HCT116 (cell line): ENCODE measurements at regions of chr18 and their contacts with region 1.

Region 1: GRCh38 chr18:76499637-76500340 is 4.7 kb upstream of the ZNF516 start:
- DNase-seq: no peak
- ATAC-seq: no peak
- H3K4me3 ChIP-seq: no peak overlapping the region
- H3K27ac ChIP-seq: no peak overlapping the region
- H3K4me1 ChIP-seq: peaks cover 0 to 12% of the 10 kb centered on the region in 2 experiments; a peak in 1 of 4 replicates
- H3K27me3 ChIP-seq: no peaks in the 10 kb centered on the region
- CTCF ChIP-seq: no peak
- POLR2A ChIP-seq: no peak
- RAD21 ChIP-seq: no peak

Region 2: GRCh38 chr18:74880706-74881278 is 1619.0 kb before region 1 on chr18:
- CTCF ChIA-PET with region 1: no interaction called
- POLR2A ChIA-PET with region 1: no interaction called
- RAD21 ChIA-PET with region 1: no interaction called
- intact Hi-C with region 1: no loop called
- DNase-seq: no peak
- ATAC-seq: no peak
- H3K4me3 ChIP-seq: no peak overlapping the region
- H3K27ac ChIP-seq: no peak overlapping the region
- H3K4me1 ChIP-seq: no peaks in the 10 kb centered on the region
- H3K27me3 ChIP-seq: no peaks in the 10 kb centered on the region
- CTCF ChIP-seq: no peak
- POLR2A ChIP-seq: no peak
- RAD21 ChIP-seq: no peak

Region 3: GRCh38 chr18:76429262-76430126 is 70.3 kb before region 1 on chr18:
- CTCF ChIA-PET with region 1: no interaction called
- POLR2A ChIA-PET with region 1: no interaction called
- RAD21 ChIA-PET with region 1: no interaction called
- intact Hi-C with region 1: no loop called
- DNase-seq: no peak
- ATAC-seq: no peak
- H3K4me3 ChIP-seq: no peak overlapping the region
- H3K27ac ChIP-seq: no peak overlapping the region
- H3K4me1 ChIP-seq: peaks cover 0 to 3% of the 10 kb centered on the region in 2 experiments; a peak in 1 of 4 replicates
- H3K27me3 ChIP-seq: no peaks in the 10 kb centered on the region
- CTCF ChIP-seq: no peak
- POLR2A ChIP-seq: no peak
- RAD21 ChIP-seq: no peak

Region 4: DNA sequence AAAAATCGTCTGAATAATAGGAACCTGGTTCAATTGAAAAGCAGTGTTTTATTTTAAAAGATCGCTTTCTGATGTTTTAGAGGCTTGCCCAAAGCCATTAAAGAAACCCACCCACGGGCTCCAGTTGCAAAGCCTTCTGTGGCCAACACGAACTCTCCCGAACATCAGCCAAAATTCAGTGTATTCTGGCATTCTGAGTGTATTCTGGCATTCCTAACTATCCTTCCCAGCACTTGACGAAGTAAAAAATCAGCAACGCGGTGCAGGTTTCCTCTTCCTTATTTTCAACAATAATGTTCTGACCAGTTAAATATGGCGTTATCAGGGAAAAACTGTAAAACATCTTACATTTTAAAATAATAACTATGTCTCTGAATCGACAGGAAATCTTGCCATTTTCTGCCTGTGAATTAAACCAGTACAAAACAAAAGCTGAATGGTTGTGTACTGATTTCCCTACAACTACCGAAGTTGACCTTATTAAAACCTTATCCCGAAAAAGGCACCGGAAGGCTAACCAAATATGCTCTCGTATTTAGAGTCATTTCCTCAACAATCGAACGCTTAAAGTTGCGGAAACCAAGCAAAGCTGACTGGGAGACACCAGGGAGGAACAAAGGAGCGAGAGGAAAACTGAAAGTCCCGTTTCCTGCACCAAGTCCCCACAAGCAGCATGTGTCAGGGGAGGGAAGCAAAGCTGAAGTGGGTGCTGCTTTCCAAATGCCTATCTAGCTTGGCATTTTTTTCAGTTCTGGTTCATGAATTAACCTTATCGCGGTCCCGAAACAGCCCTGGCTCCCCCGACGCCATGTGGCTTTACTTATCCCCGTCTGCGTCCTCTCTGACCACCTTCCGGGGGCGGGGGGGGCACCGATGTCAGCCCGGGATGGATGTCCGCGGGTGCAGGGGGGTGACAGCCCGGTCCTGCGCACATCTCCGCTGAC is 49.1 kb before region 1 on chr18:
- CTCF ChIA-PET with region 1: no interaction called
- POLR2A ChIA-PET with region 1: no interaction called
- RAD21 ChIA-PET with region 1: no interaction called
- intact Hi-C with region 1: loop called (anchors 10 kb)
- DNase-seq: no peak
- ATAC-seq: no peak
- H3K4me3 ChIP-seq: no peak overlapping the region
- H3K27ac ChIP-seq: no peak overlapping the region
- H3K4me1 ChIP-seq: peaks cover 0 to under 1% of the 10 kb centered on the region in 2 experiments; a peak in 1 of 4 replicates
- H3K27me3 ChIP-seq: no peaks in the 10 kb centered on the region
- CTCF ChIP-seq: no peak
- POLR2A ChIP-seq: no peak
- RAD21 ChIP-seq: no peak

Region 5: DNA sequence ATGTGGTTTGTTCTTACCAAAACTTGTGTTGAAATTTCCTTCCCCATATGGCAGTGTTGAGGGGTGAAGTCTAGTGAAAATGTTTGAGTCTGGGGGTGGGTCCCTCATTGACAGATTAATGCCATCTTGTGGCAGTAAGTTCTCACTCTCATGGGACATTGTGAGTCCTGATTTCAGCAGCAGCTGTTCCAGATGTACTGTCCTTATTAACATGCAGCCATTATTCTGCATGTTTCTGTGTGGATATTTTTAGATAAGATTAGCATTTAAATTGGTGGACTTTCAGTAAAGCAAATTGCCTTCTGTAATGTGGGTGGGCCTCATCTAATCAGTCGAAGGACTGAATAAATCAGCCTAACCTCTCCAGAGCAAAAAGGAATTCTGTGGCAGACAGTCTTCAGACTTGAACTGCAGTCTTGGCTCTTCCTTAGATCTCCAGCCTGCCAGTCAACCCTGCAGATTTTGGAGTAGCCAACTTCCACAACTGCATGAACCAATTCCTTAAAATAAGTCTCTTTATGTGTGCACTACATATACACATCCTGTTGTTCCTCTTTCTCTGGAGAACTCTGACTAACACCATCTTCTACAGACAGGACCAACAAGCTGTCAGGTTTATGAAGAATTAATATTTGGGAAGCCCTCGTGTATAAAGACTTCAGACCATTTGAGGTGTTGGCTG is 133.9 kb after region 1 on chr18:
- CTCF ChIA-PET with region 1: no interaction called
- POLR2A ChIA-PET with region 1: no interaction called
- RAD21 ChIA-PET with region 1: no interaction called
- intact Hi-C with region 1: no loop called
- DNase-seq: no peak
- ATAC-seq: peak; percentile 34; the same call in 1 of the 2 replicates
- H3K4me3 ChIP-seq: no peak overlapping the region
- H3K27ac ChIP-seq: no peak overlapping the region
- H3K4me1 ChIP-seq: no peaks in the 10 kb centered on the region
- H3K27me3 ChIP-seq: peaks cover 6% of the 10 kb centered on the region; the same call in 1 of the 2 replicates
- CTCF ChIP-seq: peak in 1 of 3 experiments; percentile 20; a peak in 2 of 6 replicates
- POLR2A ChIP-seq: no peak
- RAD21 ChIP-seq: no peak